ENCODE measurements at regions of chr4 and their contacts with region 1.

Region 1: GRCh38 chr4:80072744-80073472 is at the start of gene ANTXR2:
- DNase-seq: peak; percentile 89 to 97 (median 95)
- ATAC-seq: peak; percentile 95 to 98 (median 96)
- H3K4me3 ChIP-seq: peak within 1 kb of the TSS; percentile 50 to 96 (median 92)
- H3K27ac ChIP-seq: peak within 1 kb of the TSS; percentile 86 to 99 (median 93)
- H3K4me1 ChIP-seq: peaks cover 0 to 75% (median 16%) of the 10 kb centered on the region in 12 donors
- H3K27me3 ChIP-seq: no peaks in the 10 kb centered on the region
- CTCF ChIP-seq: peak in 4 of 12 donors; percentile 9 to 30 (median 20)
- POLR2A ChIP-seq: peak in 1 of 2 donors; percentile 75
- total RNA-seq, gene ANTXR2: 33.3 to 76.7 (median 48.7) TPM

Region 2: DNA sequence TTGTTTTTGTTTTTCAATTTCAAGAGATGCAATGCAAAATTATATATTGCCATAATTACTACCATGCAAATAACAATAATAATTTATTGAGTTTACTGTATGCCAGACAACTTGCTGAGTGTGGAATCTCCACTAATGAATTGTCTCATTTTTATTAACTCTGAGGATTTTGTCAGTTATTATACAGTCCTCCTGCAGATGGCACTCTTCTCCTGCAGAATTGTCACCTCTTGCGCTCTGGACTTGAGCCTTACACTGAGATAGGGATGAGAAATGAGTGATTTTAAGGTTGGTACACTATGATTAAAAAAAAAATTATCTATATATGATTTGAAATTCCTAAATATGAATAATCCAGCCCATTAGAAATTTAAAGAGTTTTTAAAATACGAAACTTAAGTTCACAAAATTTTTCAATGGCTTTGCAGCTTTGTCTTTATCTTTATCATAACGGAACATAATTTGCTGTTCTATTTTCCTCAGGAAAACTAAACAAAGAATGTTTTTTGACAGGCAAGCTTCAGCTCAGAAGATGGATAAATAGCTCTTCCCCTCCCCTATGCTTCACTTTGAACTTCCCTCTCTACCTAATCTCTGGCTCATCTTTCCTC is 1120.9 kb before region 1 on chr4:
- intact Hi-C with region 1: loop called in 1 of 10 experiments (anchors 10 kb)
- DNase-seq: peak in 1 of 5 donors; percentile 18
- ATAC-seq: peak; percentile 52 to 75 (median 68)
- H3K4me3 ChIP-seq: no peak overlapping the region
- H3K27ac ChIP-seq: no peak overlapping the region
- H3K4me1 ChIP-seq: no peaks in the 10 kb centered on the region
- H3K27me3 ChIP-seq: no peaks in the 10 kb centered on the region
- CTCF ChIP-seq: peak; percentile 54 to 85 (median 70)
- POLR2A ChIP-seq: no peak

Region 3: GRCh38 chr4:79712736-79713135 is 360.2 kb before region 1 on chr4:
- intact Hi-C with region 1: no loop called
- DNase-seq: no peak
- ATAC-seq: no peak
- H3K4me3 ChIP-seq: no peak overlapping the region
- H3K27ac ChIP-seq: no peak overlapping the region
- H3K4me1 ChIP-seq: no peaks in the 10 kb centered on the region
- H3K27me3 ChIP-seq: no peaks in the 10 kb centered on the region
- CTCF ChIP-seq: no peak
- POLR2A ChIP-seq: no peak

Region 4: GRCh38 chr4:79917246-79917645 is 155.7 kb before region 1 on chr4:
- intact Hi-C with region 1: loop called in 2 of 10 experiments (anchors 10 kb)
- DNase-seq: peak in 4 of 5 donors; percentile 11 to 30 (median 28)
- ATAC-seq: peak in 2 of 4 donors; percentile 24 to 52
- H3K4me3 ChIP-seq: no peak overlapping the region
- H3K27ac ChIP-seq: no peak overlapping the region
- H3K4me1 ChIP-seq: peaks cover 0 to 4% (median 0%) of the 10 kb centered on the region in 12 donors
- H3K27me3 ChIP-seq: no peaks in the 10 kb centered on the region
- CTCF ChIP-seq: peak; percentile 31 to 58 (median 46)
- POLR2A ChIP-seq: no peak

Region 5: GRCh38 chr4:80036949-80037685 is 35.8 kb before region 1 on chr4:
- intact Hi-C with region 1: loop called in 3 of 10 experiments (anchors 5 kb)
- DNase-seq: no peak
- ATAC-seq: peak; percentile 93 to 94 (median 94)
- H3K4me3 ChIP-seq: peak overlapping the region in 8 of 12 donors; percentile 13 to 43 (median 26)
- H3K27ac ChIP-seq: peak overlapping the region; percentile 64 to 96 (median 76)
- H3K4me1 ChIP-seq: peaks cover 0 to 34% (median 21%) of the 10 kb centered on the region in 12 donors
- H3K27me3 ChIP-seq: no peaks in the 10 kb centered on the region
- CTCF ChIP-seq: no peak
- POLR2A ChIP-seq: no peak

Region 6: GRCh38 chr4:80196922-80197573 is 124.1 kb after region 1 on chr4 and contains the start of gene PRDM8:
- intact Hi-C with region 1: loop called in 2 of 10 experiments (anchors 5 to 10 kb)
- DNase-seq: no peak
- ATAC-seq: peak in 1 of 4 donors; percentile 39
- H3K4me3 ChIP-seq: peak within 1 kb of the TSS in 11 of 12 donors; percentile 12 to 54 (median 42)
- H3K27ac ChIP-seq: no peak within 1 kb of the TSS
- H3K4me1 ChIP-seq: peaks cover 0 to 27% (median 4%) of the 10 kb centered on the region in 12 donors
- H3K27me3 ChIP-seq: peaks cover 0 to 81% (median 49%) of the 10 kb centered on the region in 9 donors
- CTCF ChIP-seq: no peak
- POLR2A ChIP-seq: no peak
- total RNA-seq, gene PRDM8: 0.39 to 1.9 (median 0.84) TPM

Measured in heart left ventricle (tissue), 16 donors.